AG04449 (cell line): ENCODE measurements at regions of chr14 and their contacts with region 1.

Region 1: DNA sequence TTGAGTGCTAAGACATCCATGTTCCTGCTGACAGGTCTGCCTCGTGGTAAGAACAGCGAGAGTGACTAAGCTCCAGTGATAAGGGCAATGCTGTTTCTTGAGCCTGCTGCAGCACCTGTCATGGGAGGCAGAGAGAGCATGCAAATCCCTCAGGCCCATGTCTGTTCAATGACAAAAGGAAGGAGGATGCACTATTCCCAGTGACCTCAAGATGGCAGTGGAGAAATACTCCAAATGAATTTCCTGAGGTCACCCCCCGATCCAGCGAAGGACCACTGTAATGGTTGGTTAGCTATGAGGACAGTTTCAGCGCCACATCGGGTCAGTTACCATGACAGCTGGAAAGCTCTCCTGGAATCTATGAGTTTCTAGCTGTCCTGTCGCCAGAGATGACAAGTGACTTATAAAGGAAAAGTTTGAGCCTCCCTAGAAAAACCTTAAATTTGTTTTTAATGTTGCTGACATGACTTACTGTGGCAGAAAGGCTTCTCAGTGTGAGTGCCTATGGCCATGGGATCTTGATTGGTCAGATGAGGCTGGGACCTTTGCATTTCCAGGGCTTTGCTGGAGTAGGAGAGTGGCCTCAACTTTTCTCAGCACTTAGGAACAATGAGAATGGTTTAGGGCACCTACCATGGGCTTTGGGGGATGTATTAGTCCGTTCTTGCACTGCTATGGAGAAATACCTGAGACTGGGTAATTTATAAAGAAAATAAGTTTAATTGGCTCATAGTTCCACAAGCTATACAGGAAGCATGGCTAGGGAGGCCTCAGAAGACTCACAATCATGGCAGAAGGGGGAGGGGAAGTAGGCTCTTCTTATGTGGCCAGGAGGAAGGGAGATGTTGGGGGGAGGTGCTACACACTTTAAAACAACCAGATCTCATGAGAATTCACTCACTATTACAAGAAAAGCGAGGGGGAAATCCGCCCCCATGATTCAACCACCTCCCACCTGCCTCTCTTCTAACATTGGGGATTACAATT is 88.0 kb upstream of the TMEM260 start:
- DNase-seq: no peak
- H3K4me3 ChIP-seq: no peak overlapping the region
- CTCF ChIP-seq: peak; percentile 72

Region 2: DNA sequence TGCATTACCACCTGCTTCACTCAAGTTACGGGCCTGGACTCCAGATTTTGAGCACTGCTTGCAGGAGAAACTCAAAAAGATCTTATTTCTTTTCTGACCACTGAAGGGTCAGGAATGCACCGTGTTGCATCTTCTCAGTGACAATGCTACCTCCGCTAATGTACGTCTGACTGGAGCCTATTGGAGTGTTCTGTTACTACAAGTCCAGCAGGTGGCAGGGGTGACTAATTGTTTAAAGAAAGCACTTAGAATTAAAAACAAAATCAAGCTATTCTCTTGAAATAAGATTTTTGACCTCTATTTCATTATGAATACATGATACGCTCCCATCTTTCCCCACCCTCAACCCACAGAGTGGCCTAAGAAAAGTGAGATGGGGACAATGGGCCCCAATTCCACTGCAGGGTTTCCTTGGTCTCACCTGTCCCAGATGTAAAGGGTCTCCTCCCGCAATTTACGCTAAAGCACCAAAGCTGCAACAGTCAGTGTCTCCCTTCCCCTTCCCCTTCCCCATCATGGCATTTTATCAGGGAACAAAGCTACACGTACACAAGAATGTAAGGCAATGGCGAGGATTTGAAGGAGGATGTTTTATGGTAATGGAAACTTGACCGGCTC is 1053.4 kb before region 1 on chr14:
- CTCF ChIA-PET with region 1: interaction called, 13 read pairs
- POLR2A ChIA-PET with region 1: no interaction called
- DNase-seq: no peak
- H3K4me3 ChIP-seq: no peak overlapping the region
- CTCF ChIP-seq: peak; percentile 41

Region 3: DNA sequence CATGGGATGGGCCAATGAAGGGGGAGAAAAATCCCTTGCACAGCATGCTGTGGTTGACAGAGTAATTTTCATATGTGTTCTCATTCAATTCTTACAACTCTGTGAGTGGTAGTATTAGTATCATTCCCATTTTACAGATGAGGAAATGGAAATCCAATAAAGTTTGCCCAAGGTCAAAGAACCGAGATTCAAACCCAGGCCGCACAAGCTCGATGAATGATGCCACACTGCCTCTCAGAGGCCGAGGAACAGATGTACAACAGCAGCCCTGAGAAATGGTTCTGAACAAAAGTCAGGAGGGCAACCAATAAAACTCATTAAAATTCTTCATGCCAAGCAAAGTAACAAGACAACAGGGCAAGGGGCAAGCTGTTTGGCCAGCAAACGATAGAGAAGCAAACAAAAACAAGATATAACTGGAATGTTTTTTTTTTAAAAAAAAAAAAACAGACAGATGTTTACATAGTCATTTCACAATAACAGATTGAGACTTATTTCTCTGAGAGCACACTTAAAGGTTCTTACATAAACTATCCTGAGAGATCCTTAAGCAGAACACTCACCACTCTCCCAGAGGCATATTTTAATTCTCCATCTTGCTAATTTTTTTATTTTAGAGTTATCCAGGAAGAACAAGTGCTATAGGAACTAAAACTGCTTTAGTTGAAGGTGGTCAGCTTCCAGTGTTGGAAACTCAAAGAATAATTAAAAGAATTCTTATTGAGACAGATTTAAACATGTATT is 691.3 kb after region 1 on chr14:
- CTCF ChIA-PET with region 1: interaction called, 17 read pairs
- POLR2A ChIA-PET with region 1: no interaction called
- DNase-seq: no peak
- H3K4me3 ChIP-seq: no peak overlapping the region
- CTCF ChIP-seq: peak; percentile 10

Region 4: GRCh38 chr14:57293866-57294837 is 802.6 kb after region 1 on chr14:
- CTCF ChIA-PET with region 1: interaction called, 31 read pairs
- POLR2A ChIA-PET with region 1: no interaction called
- DNase-seq: no peak
- H3K4me3 ChIP-seq: no peak overlapping the region
- CTCF ChIP-seq: no peak

Region 5: GRCh38 chr14:57323721-57324120 is 832.1 kb after region 1 on chr14:
- CTCF ChIA-PET with region 1: interaction called, 15 read pairs
- POLR2A ChIA-PET with region 1: no interaction called
- DNase-seq: no peak
- H3K4me3 ChIP-seq: no peak overlapping the region
- CTCF ChIP-seq: no peak